ENCODE measurements at regions of chr4 and their contacts with region 1.

Region 1: DNA sequence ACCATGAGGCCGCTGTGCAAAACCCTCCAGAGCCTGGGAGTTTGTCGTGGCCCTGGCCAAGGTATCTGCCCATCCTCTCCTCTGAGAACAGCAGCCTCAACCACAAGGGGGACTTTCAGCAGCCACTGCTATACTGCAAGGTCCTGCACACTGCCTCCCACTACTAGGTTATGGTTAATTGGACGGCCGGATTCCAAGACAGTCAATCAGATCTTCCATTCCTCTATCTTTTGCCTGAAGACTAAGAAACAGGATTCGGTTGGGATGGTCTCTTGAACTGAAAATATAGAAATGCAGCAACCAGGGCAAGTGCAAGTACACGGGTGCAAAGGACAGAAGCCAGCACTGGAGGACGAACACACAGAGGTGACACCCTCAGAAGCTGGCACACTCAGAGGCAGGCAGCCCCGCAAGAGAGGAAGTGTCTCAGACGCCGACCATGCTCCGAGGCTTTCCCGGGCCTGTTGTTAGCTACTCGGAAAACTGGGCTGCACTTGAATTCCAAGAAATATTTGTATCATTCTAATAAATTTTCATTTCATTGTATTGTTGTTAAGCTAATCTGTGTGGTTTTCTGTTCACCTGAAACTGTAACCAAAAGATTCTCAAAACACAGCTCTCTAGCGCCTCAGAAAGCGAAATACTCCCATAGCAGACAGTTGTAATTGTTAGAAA is 63.3 kb downstream of the AFAP1 start:
- DNase-seq: peak; percentile 75
- H3K4me3 ChIP-seq: no peak overlapping the region
- H3K27ac ChIP-seq: peak overlapping the region; percentile 30
- H3K4me1 ChIP-seq: peaks cover 55% of the 10 kb centered on the region
- H3K27me3 ChIP-seq: no peaks in the 10 kb centered on the region
- CTCF ChIP-seq: peak; percentile 44 to 57
- POLR2A ChIP-seq: peak; percentile 34

Region 2: DNA sequence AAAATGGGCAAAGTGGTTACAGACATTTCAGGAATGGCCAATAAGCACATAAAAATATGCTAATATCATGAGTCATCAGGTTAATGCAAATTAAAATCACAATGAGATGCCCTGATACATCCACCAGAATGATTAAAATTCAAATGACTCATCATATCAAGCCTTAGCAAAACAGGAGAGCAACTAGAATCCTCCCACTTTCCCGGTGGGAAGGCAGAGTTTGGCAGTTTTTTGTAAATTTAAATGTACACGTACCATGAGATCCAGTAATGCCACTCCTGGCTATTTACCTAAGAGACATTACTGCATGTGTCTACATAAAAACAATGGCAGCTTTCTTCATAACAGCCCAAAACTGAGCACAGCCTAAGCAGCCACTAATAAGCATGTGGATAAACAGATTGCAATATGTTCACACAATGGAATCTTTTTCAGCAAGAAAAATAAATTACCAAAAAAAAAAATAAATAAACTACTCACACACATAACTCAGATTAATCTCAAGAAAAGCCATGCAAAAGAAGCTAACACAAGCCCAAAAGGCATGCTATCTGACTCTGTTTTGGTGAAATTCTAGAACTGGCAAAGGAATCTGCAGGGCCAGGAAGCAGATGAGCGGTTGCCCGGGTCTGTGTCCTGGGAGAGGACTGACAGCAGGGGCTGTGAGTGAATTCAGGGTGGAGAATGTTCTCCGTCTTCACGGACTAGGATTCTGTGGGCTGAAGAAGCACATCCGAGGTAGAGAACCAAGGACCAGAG is 14.5 kb after region 1 on chr4:
- CTCF ChIA-PET with region 1: interaction called, 18 read pairs
- POLR2A ChIA-PET with region 1: no interaction called
- dilution Hi-C with region 1: no loop called
- intact Hi-C with region 1: no loop called
- DNase-seq: peak; percentile 88
- H3K4me3 ChIP-seq: no peak overlapping the region
- H3K27ac ChIP-seq: peak overlapping the region; percentile 57
- H3K4me1 ChIP-seq: peaks cover 44% of the 10 kb centered on the region
- H3K27me3 ChIP-seq: no peaks in the 10 kb centered on the region
- CTCF ChIP-seq: no peak
- POLR2A ChIP-seq: no peak

Region 3: GRCh38 chr4:7904952-7905915 is 28.9 kb after region 1 on chr4:
- CTCF ChIA-PET with region 1: interaction called, 20 read pairs
- POLR2A ChIA-PET with region 1: interaction called, 3 read pairs
- dilution Hi-C with region 1: no loop called
- intact Hi-C with region 1: no loop called
- DNase-seq: no peak
- H3K4me3 ChIP-seq: no peak overlapping the region
- H3K27ac ChIP-seq: peak overlapping the region; percentile 75
- H3K4me1 ChIP-seq: peaks cover 94% of the 10 kb centered on the region
- H3K27me3 ChIP-seq: no peaks in the 10 kb centered on the region
- CTCF ChIP-seq: no peak
- POLR2A ChIP-seq: no peak

Region 4: DNA sequence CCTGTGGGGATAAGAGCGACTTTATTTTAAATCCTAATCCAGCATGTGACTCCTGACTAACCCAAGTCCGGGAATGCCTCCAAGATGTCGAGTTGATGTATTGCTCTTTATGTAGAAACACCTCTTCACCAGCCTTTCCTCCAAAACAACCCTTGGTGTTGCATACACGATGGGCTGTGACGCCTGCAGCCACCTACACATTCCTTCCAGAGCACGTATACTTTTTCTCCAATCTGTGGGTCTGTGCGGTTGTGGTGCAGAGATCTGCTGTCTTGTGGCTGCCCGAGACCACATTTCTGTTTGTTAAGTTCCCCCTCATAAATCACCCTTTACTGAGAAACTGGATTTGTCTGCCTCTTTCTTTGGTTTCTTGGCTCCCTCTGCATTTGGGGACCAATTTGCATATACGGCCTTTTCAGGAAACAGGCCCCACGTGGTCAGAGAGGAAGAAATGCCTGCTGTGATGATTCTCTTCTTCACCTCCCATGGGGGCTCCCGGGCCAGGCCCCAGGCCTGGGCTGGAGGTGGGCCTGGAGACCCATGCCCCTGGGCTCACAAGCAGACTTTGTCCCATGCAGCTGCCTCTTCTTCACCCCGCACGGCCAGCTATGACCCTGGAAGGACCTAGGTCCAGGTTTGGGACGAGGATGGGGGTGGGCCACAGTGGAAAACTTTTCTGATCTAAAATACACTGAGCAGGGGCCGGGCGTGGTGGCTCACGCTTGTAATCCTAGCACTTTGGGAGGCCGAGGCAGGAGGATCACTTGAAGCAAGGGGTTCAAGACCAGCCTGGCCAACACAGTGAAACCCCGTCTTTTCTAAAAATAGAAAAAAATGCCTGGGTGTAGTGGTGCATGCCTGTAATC is 84.7 kb after region 1 on chr4:
- CTCF ChIA-PET with region 1: interaction called, 3 read pairs
- POLR2A ChIA-PET with region 1: interaction called, 5 read pairs
- dilution Hi-C with region 1: no loop called
- intact Hi-C with region 1: loop called (anchors 1 kb)
- DNase-seq: peak; percentile 96
- H3K4me3 ChIP-seq: no peak overlapping the region
- H3K27ac ChIP-seq: peak overlapping the region; percentile 41
- H3K4me1 ChIP-seq: peaks cover 32% of the 10 kb centered on the region
- H3K27me3 ChIP-seq: no peaks in the 10 kb centered on the region
- CTCF ChIP-seq: no peak
- POLR2A ChIP-seq: peak; percentile 38

Region 5: GRCh38 chr4:7967501-7968261 is 91.3 kb after region 1 on chr4:
- CTCF ChIA-PET with region 1: no interaction called
- POLR2A ChIA-PET with region 1: no interaction called
- dilution Hi-C with region 1: no loop called
- intact Hi-C with region 1: loop called (anchors 2 kb)
- DNase-seq: peak; percentile 74
- H3K4me3 ChIP-seq: no peak overlapping the region
- H3K27ac ChIP-seq: peak overlapping the region; percentile 89
- H3K4me1 ChIP-seq: peaks cover 48% of the 10 kb centered on the region
- H3K27me3 ChIP-seq: no peaks in the 10 kb centered on the region
- CTCF ChIP-seq: no peak
- POLR2A ChIP-seq: no peak